GM10248 (cell line): ENCODE measurements at regions of chr1 and their contacts with region 1.

Region 1: DNA sequence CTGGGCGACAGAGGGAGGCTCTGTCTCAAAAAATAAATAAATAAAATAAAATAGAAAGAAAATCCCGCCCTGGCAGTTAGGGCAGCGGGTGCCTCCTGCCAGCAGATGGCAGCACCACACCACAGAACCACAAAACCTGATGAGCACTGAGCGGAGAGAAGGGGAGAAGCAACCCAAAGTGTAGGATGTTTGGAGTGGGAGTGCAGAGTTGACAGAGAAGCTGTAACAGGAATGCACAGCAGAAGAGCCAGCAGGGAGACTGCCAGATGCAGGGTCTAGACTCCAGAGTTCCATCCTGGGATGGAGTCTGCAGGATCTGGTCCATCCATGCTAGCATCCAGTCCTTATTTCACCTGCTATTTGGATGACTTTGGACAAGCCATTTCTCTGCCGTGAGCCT is 29.7 kb upstream of the KIRREL1 start:
- DNase-seq: peak; percentile 65
- CTCF ChIP-seq: peak; percentile 85

Region 2: DNA sequence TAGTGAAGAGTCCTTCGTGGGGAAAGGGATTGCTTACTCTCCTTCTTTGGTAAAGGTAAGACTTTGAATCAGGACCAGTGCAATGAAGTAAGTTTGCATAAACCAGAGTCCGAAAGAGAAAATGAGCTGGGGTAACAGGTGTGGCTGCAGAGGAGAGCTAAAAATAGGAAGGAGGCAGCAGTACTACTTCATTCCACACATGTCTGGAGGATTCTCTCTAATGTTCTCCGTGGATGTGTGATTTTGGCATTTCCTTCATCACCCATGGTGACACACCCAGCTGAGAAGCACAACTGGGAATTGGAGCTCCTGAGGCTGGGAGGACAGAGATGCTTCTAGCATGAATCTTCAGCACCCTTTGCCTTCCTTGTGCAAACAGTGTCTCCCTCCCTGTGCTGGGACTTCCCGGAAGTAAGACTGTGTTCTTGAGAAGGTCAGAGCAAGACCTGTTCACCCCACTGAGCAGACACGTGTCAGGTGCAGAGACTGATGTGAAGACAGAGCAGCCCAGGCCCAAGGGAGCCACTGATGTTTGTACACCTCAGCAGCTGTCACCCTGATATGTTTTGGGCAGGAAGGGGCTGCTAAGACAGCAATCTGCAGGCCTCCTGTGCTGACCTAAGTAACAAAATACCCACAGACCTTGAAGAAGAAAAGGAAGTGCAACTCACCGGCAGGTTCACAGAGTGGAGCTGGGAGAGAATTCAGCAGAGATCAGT is 157.1 kb before region 1 on chr1:
- CTCF ChIA-PET with region 1: no interaction called
- POLR2A ChIA-PET with region 1: no interaction called
- DNase-seq: peak; percentile 51
- CTCF ChIP-seq: no peak

Region 3: DNA sequence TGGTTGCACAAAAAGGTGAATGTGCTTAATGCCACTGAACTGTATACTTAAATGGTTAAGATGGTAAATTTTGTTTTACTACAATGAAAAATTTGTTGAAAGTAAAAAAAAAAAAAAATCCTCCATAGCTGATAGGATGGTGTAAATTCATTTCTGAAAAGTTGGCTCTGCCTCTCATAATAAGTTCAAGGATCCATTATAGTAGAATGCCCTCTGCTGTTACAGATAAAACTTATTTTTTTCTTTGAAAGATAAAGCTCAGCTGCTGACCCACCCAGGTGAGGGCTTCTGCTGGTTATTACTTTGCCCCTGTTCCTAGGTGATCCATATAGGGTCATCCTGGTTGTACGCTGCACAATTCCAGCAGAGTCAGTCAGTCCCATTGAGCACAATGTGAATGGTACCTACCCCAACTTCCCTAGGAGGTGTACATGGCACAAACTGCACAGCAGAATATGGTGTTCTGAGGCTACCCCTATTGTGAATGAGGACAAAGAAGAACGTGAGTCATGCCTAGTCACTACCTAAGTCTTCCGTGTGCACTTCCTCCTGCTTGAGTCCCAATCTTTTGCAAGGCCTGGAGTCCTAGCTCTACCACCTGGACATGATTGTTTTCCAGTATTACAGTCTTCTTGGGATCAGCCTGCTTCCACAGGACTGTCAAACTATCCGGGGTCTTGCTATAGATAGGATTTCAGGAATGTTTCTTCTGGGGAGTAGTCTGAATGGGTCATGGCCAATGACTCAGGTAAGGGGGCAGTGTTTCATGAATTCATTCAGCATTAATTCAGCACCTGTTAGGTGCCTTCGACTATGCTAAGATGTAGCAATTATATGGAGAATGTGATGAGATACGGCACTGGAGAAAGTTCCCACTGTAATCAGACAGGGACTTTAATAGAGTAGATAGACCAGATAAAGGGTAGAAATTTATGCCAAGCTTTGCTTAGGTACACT is 101.3 kb before region 1 on chr1:
- CTCF ChIA-PET with region 1: no interaction called
- POLR2A ChIA-PET with region 1: no interaction called
- DNase-seq: no peak
- CTCF ChIP-seq: no peak

Region 4: GRCh38 chr1:157984469-157984868 is 20.8 kb after region 1 on chr1:
- CTCF ChIA-PET with region 1: interaction called, 24 read pairs
- POLR2A ChIA-PET with region 1: no interaction called
- DNase-seq: no peak
- CTCF ChIP-seq: no peak

Region 5: GRCh38 chr1:158257888-158258287 is 294.2 kb after region 1 on chr1:
- CTCF ChIA-PET with region 1: no interaction called
- POLR2A ChIA-PET with region 1: no interaction called
- DNase-seq: no peak
- CTCF ChIP-seq: no peak

Region 6: GRCh38 chr1:158793604-158794003 is 829.9 kb after region 1 on chr1:
- CTCF ChIA-PET with region 1: no interaction called
- POLR2A ChIA-PET with region 1: no interaction called
- DNase-seq: no peak
- CTCF ChIP-seq: peak; percentile 31